Ascending aorta (tissue), 2 donors: ENCODE measurements at regions of chr12 and their contacts with region 1.

Region 1: DNA sequence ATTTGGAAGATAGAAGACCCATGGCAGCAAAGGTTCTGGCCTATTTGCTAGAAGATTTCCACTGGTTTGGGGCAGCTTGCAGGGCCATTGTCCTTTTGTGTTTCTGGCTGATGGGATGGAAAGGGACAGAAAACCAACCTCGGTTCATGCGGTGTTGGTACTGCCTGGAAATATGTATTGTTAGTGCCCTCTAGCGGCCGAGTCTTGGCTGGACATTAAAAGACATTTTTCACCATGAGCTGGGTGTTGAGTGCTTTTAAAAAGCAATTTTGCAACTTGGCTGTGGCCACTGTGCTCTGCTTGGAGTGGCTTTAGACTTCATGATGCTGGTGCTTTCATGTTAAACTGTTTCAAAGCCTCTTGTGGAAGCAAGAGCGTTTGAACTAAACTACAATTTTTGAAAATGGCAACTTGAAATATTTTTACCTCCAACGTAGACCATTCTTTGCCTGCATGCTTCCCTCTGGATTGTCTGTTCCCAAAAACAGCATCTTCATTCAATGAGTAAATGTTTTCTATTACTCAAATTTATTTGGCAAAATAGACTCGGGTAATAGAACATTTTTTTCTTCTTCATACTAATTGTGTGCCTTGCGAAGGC is 102.7 kb upstream of the TBX5 start:
- DNase-seq: peak in 1 of 2 donors; percentile 79
- H3K4me3 ChIP-seq: no peak overlapping the region
- H3K27ac ChIP-seq: no peak overlapping the region
- H3K4me1 ChIP-seq: no peaks in the 10 kb centered on the region
- H3K27me3 ChIP-seq: no peaks in the 10 kb centered on the region
- CTCF ChIP-seq: peak; percentile 56 to 78 (median 57)

Region 2: GRCh38 chr12:113965951-113966797 is 542.5 kb before region 1 on chr12 and contains the start of gene RBM19:
- intact Hi-C with region 1: loop called (anchors 5 kb)
- DNase-seq: peak; percentile 85 to 99
- H3K4me3 ChIP-seq: peak within 1 kb of the TSS; percentile 79 to 80
- H3K27ac ChIP-seq: peak within 1 kb of the TSS; percentile 50 to 67
- H3K4me1 ChIP-seq: peaks cover 0 to 6% of the 10 kb centered on the region in 2 donors
- H3K27me3 ChIP-seq: no peaks in the 10 kb centered on the region
- CTCF ChIP-seq: peak; percentile 87 to 94 (median 91)
- total RNA-seq, gene RBM19: 22.8 TPM

Region 3: DNA sequence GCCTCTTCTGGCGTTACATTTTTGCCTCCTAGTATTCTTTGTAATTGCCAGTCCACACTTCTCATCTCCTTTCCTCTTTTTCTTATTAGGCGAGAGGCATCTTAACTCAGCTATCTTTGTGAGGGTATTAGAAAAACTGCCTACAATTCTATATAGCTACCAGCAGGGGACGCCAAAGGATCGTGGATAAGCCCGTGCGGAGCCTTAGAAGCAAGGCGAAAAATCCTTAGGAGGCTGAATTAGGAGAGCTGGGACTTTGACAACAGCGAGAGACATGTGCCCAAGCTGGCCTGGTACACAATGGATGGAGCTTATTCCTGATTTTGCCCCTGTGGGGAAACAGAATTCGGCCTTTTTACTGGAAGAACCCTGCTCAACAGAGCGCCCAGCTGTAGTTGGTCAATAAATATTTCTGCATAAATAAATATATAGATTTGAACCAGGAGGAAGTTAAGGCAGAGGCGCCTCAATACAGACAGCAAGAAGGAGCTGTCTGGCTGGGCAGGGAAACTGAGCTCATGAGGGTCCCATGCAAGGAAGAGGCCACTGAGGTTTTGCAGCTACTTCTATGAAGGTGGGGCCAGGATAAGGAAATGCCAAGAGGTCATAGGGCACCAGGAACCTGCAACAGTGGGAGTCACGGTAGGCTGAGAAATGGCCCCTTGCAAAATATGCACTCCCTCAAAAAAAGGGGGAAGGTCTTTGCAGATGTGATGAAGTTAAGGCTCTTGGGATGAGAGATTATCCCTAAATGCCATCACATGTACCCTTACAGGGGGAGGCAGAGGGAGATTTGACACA is 527.9 kb before region 1 on chr12:
- intact Hi-C with region 1: loop called (anchors 1 kb)
- DNase-seq: no peak
- H3K4me3 ChIP-seq: no peak overlapping the region
- H3K27ac ChIP-seq: no peak overlapping the region
- H3K4me1 ChIP-seq: no peaks in the 10 kb centered on the region
- H3K27me3 ChIP-seq: no peaks in the 10 kb centered on the region
- CTCF ChIP-seq: peak; percentile 79 to 88 (median 85)

Region 4: GRCh38 chr12:114166362-114166761 is 342.3 kb before region 1 on chr12:
- intact Hi-C with region 1: loop called (anchors 1 kb)
- DNase-seq: no peak
- H3K4me3 ChIP-seq: no peak overlapping the region
- H3K27ac ChIP-seq: no peak overlapping the region
- H3K4me1 ChIP-seq: no peaks in the 10 kb centered on the region
- H3K27me3 ChIP-seq: no peaks in the 10 kb centered on the region
- CTCF ChIP-seq: peak in 2 of 3 experiments; percentile 52 to 71

Region 5: DNA sequence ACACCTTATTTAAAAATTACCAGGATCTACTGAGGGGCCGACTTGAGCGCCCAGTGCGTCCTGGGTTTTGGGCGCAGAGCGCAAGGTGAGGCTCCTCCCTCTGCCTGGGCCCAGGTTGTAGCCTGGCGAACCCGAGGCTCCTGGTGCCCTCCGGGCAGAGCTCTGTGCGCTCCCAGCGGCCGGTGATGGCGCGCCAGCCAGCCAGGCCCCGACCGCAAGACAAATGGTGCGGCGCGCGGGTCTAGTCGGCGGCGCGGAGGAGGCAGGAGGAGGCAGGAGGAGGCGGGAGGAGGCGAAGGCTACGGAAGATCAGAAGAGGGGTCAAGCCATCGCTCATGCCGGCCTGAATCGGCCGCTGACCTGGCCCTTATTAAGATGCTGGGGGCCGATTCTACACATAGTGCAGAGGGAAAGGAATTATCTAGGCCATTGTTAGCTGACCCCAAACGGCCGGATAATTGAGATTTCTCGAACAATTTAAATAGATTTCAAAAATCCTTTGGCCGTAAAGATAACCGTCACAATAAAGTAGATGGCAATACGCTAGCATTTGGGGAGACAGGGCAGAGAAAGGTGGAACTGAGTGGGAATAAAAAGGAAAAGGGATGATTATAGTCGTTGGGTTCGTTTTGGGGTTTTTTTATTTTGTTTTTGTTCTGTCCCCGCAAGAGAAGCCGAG is 105.5 kb before region 1 on chr12:
- intact Hi-C with region 1: no loop called
- DNase-seq: no peak
- H3K4me3 ChIP-seq: no peak overlapping the region
- H3K27ac ChIP-seq: no peak overlapping the region
- H3K4me1 ChIP-seq: peaks cover 0 to 9% of the 10 kb centered on the region in 2 donors
- H3K27me3 ChIP-seq: peaks cover 20% of the 10 kb centered on the region
- CTCF ChIP-seq: no peak

Region 6: DNA sequence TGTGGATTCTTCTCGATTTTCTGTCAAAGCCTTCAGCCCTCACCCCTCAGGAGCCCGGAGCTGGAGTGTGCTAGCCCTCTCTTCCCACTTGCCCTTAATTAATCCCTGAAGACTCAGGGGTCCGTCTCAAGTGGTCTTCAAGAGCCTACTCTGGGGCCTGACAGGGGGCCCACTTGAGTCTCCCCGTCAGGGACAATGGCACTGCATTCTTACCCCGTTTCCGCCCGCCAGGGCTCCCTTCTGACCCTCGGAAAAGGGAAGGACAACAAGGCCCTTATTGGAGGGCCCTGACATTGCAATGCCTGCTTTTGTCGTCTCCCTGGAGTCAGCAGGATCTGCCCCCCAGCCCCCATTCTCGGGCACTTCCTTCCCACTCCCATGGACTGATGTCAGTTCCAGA is 141.0 kb after region 1 on chr12:
- intact Hi-C with region 1: no loop called
- DNase-seq: no peak
- H3K4me3 ChIP-seq: no peak overlapping the region
- H3K27ac ChIP-seq: no peak overlapping the region
- H3K4me1 ChIP-seq: no peaks in the 10 kb centered on the region
- H3K27me3 ChIP-seq: no peaks in the 10 kb centered on the region
- CTCF ChIP-seq: no peak

Region 7: GRCh38 chr12:115398311-115398781 is 889.7 kb after region 1 on chr12:
- intact Hi-C with region 1: no loop called
- DNase-seq: no peak
- H3K4me3 ChIP-seq: no peak overlapping the region
- H3K27ac ChIP-seq: no peak overlapping the region
- H3K4me1 ChIP-seq: no peaks in the 10 kb centered on the region
- H3K27me3 ChIP-seq: no peaks in the 10 kb centered on the region
- CTCF ChIP-seq: no peak